MCF 10A (cell line): ENCODE measurements at regions of chr3 and their contacts with region 1.

Region 1: GRCh38 chr3:107704477-107704876 is 181.7 kb downstream of the BBX start:
- DNase-seq: no peak
- H3K4me3 Mint-ChIP-seq: no peak overlapping the region
- H3K27ac Mint-ChIP-seq: no peak overlapping the region
- H3K4me1 Mint-ChIP-seq: peaks cover 20% of the 10 kb centered on the region
- H3K27me3 Mint-ChIP-seq: no peaks in the 10 kb centered on the region
- CTCF ChIP-seq: no peak

Region 2: GRCh38 chr3:107690522-107691138 is 13.8 kb before region 1 on chr3:
- CTCF ChIA-PET with region 1: interaction called, 15 read pairs
- POLR2A ChIA-PET with region 1: interaction called, 9 read pairs
- intact Hi-C with region 1: no loop called
- DNase-seq: peak; percentile 65
- H3K4me3 Mint-ChIP-seq: no peak overlapping the region
- H3K27ac Mint-ChIP-seq: peak overlapping the region; percentile 63
- H3K4me1 Mint-ChIP-seq: peaks cover 8% of the 10 kb centered on the region
- H3K27me3 Mint-ChIP-seq: no peaks in the 10 kb centered on the region
- CTCF ChIP-seq: peak; percentile 43